ENCODE measurements at regions of chrX and their contacts with region 1.

Region 1: GRCh38 chrX:109357706-109358105 is 124.2 kb downstream of the GUCY2F start:
- DNase-seq: no peak
- H3K4me3 Mint-ChIP-seq: no peak overlapping the region
- H3K27ac Mint-ChIP-seq: no peak overlapping the region
- H3K4me1 Mint-ChIP-seq: no peaks in the 10 kb centered on the region
- H3K27me3 Mint-ChIP-seq: no peaks in the 10 kb centered on the region

Region 2: GRCh38 chrX:109155161-109155560 is 202.5 kb before region 1 on chrX:
- intact Hi-C with region 1: no loop called
- DNase-seq: no peak
- H3K4me3 Mint-ChIP-seq: no peak overlapping the region
- H3K27ac Mint-ChIP-seq: no peak overlapping the region
- H3K4me1 Mint-ChIP-seq: no peaks in the 10 kb centered on the region
- H3K27me3 Mint-ChIP-seq: no peaks in the 10 kb centered on the region

Region 3: GRCh38 chrX:109270580-109271484 is 86.9 kb before region 1 on chrX:
- intact Hi-C with region 1: loop called (anchors 1 kb)
- DNase-seq: no peak
- H3K4me3 Mint-ChIP-seq: no peak overlapping the region
- H3K27ac Mint-ChIP-seq: peak overlapping the region; percentile 68
- H3K4me1 Mint-ChIP-seq: peaks cover 2% of the 10 kb centered on the region
- H3K27me3 Mint-ChIP-seq: no peaks in the 10 kb centered on the region

Region 4: GRCh38 chrX:110021180-110022022 is 663.7 kb after region 1 on chrX:
- intact Hi-C with region 1: no loop called
- DNase-seq: no peak
- H3K4me3 Mint-ChIP-seq: no peak overlapping the region
- H3K27ac Mint-ChIP-seq: no peak overlapping the region
- H3K4me1 Mint-ChIP-seq: peaks cover 2% of the 10 kb centered on the region
- H3K27me3 Mint-ChIP-seq: no peaks in the 10 kb centered on the region

Measured in activated T-helper 2 cell treated with anti-CD3 and anti-CD28 coated beads, Interferon-gamma antibody, Interleukin-2, Interleukin-4, amounts not matched to agents 10 μg/mL and 5 μg/mL and 100 μg/mL, durations not matched to agents 14 hours and 24 hours and 36 hours (primary cell).